ENCODE measurements at regions of chr19 and their contacts with region 1.

Region 1: GRCh38 chr19:45178262-45179071 is at the start of gene BLOC1S3:
- DNase-seq: peak; percentile 100
- ATAC-seq: peak; percentile 91
- H3K4me3 Mint-ChIP-seq: peak within 1 kb of the TSS; percentile 85
- H3K27ac Mint-ChIP-seq: peak within 1 kb of the TSS; percentile 93
- H3K4me1 Mint-ChIP-seq: peaks cover 38% of the 10 kb centered on the region
- H3K27me3 Mint-ChIP-seq: no peaks in the 10 kb centered on the region
- total RNA-seq, gene BLOC1S3: 16.0 to 16.7 TPM

Region 2: DNA sequence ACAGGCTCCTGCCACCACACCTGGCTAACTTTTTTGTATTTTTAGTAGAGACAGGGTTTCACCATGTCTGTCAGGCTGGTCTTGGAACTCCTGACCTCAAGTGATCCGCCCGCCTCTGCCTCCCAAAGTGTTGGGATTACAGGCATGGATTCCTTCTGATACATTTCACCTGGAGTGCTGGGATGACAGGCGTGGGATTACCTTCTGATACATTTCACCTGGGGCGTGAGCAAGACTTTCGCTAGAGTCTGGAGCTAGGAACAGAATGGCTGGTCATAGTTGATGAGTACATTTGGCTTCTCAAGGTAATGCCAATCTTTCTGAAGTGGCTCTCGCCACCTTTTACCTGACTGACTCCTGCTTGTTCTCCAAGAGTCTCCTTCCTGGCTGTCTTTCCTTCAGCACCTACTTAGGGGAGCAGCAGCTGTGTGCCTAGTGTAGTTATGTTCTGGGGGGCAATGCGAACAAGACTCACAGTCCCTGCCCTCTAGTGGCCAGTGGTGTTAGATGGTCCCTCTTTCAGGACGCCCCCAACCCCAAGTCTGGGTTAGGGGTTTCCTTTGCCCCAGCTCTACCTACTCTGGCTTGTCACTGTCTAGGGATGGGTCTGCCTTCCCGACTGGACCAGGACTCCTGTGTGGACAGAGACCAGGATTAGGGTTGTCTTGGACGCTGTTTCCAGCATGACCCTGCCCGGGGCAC is 66.2 kb before region 1 on chr19:
- CTCF ChIA-PET with region 1: no interaction called
- POLR2A ChIA-PET with region 1: no interaction called
- DNase-seq: no peak
- ATAC-seq: no peak
- H3K4me3 Mint-ChIP-seq: no peak overlapping the region
- H3K27ac Mint-ChIP-seq: no peak overlapping the region
- H3K4me1 Mint-ChIP-seq: peaks cover 35% of the 10 kb centered on the region
- H3K27me3 Mint-ChIP-seq: no peaks in the 10 kb centered on the region

Region 3: DNA sequence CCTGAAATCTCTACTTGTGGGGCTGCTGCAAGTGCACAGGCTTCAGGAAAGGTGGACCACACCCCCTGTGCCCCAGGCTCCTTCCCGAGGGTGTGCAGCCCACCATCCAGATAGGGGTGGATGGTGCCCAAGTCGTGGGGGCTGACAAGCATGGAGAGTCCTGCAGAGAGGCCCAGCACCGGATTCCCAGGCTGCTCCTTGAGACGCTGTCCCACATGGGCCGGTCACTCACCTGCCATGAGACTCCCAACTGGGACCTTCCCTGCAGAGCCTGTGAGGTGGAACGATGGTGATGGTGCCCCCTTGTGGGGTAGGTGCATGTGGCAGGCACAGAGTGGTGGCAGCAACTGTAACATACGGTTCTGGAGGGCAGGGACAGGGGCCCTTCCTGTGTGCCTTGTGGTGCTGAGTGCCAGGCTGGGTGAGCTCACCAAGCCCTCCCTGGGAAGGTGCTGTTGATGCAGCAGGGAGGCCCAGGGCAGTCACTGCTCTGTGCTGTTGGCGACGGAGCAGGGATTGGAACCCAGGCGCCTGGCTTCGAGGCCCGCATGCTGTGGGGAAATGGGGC is 52.5 kb before region 1 on chr19:
- CTCF ChIA-PET with region 1: interaction called, 13 read pairs
- POLR2A ChIA-PET with region 1: no interaction called
- DNase-seq: peak; percentile 82
- ATAC-seq: peak; percentile 89
- H3K4me3 Mint-ChIP-seq: no peak overlapping the region
- H3K27ac Mint-ChIP-seq: no peak overlapping the region
- H3K4me1 Mint-ChIP-seq: peaks cover 36% of the 10 kb centered on the region
- H3K27me3 Mint-ChIP-seq: no peaks in the 10 kb centered on the region

Region 4: DNA sequence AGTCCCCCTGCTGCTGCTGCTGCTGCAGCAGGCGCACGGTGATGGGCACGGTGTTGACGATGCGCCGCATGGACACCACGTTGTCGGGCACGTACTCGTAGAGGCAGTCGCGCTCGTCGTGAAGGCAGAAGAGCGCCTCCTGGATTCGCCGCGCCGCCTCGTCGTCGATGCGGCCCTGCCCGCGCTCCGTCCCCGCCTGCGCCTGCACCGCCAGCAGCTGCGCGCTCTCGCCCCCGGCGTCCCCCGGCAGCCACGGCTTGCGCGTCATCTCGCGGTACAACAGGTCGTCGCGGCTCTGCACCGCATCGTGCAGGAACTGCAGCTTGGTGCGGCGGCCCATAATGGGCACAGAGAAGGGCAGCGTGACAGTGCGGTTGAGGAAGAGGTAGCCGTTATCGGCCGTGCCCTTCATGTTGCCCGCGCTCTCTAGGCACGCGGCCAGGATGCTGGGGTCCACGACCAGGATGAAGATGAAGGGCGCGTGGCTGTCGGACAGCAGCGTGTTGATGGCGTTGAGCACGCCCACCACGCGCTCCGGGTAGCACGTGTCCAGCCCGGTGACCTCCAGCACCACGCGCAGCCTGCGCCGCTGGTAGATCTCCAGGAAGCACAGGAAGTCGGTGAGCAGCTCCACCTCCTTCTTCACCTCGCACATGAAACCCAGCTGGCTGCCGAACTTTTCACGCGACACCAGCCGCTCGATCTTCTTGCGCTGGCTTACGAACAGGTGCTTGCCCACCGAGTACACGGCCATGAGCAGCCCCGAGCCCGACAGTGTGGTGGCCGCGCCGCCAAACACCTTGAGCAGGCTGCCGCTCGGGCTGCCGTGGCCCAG is 25.7 kb before region 1 on chr19:
- CTCF ChIA-PET with region 1: interaction called, 6 read pairs
- POLR2A ChIA-PET with region 1: interaction called, 10 read pairs
- DNase-seq: peak; percentile 74
- ATAC-seq: peak; percentile 54
- H3K4me3 Mint-ChIP-seq: peak overlapping the region; percentile 63
- H3K27ac Mint-ChIP-seq: peak overlapping the region; percentile 77
- H3K4me1 Mint-ChIP-seq: peaks cover 34% of the 10 kb centered on the region
- H3K27me3 Mint-ChIP-seq: peaks cover 33% of the 10 kb centered on the region

Region 5: GRCh38 chr19:45164577-45165335 is 13.7 kb before region 1 on chr19:
- CTCF ChIA-PET with region 1: interaction called, 6 read pairs
- POLR2A ChIA-PET with region 1: interaction called, 24 read pairs
- DNase-seq: peak; percentile 72
- ATAC-seq: peak; percentile 87
- H3K4me3 Mint-ChIP-seq: peak overlapping the region; percentile 28
- H3K27ac Mint-ChIP-seq: peak overlapping the region; percentile 80
- H3K4me1 Mint-ChIP-seq: peaks cover 40% of the 10 kb centered on the region
- H3K27me3 Mint-ChIP-seq: no peaks in the 10 kb centered on the region